ENCODE measurements at regions of chr16 and their contacts with region 1.

Region 1: GRCh38 chr16:4253394-4254150 is 11.7 kb upstream of the SRL start:
- DNase-seq: peak; percentile 98 to 100 (median 99)
- ATAC-seq: peak; percentile 96
- H3K4me3 ChIP-seq: peak overlapping the region; percentile 81 to 92
- H3K4me3 Mint-ChIP-seq: peak overlapping the region; percentile 93
- H3K27ac ChIP-seq: peak overlapping the region; percentile 88 to 89
- H3K27ac Mint-ChIP-seq: peak overlapping the region; percentile 98
- H3K4me1 ChIP-seq: peaks cover 6% of the 10 kb centered on the region
- H3K4me1 Mint-ChIP-seq: peaks cover 7% of the 10 kb centered on the region
- H3K27me3 ChIP-seq: no peaks in the 10 kb centered on the region
- H3K27me3 Mint-ChIP-seq: no peaks in the 10 kb centered on the region
- CTCF ChIP-seq: no peak

Region 2: DNA sequence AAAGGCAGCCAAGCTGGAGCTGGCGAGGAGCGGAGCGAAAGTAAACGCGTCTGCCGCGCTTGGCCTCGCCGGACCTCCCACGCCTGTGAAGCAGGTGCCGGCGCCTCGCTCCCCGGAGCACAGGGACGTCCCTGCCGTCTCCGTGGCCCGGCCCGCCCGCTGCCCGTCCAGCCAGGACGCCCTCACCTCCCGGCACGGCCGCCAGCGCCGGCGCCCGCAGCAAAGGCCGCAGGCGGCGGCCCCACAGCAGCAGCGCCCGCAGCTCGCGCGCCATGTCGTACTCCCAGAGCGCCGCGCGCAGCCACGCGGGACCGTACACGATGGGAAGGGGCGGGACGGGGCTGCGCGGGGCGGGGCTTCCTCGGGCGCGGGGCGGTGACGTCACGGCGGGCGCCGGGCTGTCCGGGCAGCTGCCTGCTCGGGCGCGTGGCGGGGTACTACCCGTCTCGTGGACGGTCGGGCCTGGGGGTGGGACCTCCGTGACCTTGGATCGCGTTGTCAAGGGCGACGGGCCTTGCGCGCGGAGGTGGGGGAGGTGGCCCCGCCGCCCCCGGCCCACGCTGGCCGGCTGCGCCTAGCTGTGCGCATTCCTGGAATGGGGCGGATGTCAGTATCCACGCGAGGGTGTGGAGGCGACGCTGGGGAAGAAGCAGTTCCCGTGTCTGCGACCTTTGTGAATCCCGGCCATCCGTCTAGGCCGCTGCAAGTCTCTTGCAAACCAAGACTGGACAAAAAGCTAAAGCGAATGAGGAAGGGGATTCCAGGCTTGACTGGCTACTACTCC is 536.1 kb before region 1 on chr16 and contains the start of gene TRAP1:
- CTCF ChIA-PET with region 1: no interaction called
- POLR2A ChIA-PET with region 1: interaction called, 3 read pairs
- intact Hi-C with region 1: loop called (anchors 2 to 5 kb)
- DNase-seq: peak; percentile 85 to 96 (median 91)
- ATAC-seq: peak; percentile 97
- H3K4me3 ChIP-seq: peak within 1 kb of the TSS; percentile 94 to 96
- H3K4me3 Mint-ChIP-seq: peak within 1 kb of the TSS; percentile 91
- H3K27ac ChIP-seq: peak within 1 kb of the TSS; percentile 84 to 88
- H3K27ac Mint-ChIP-seq: peak within 1 kb of the TSS; percentile 92
- H3K4me1 ChIP-seq: peaks cover 15% of the 10 kb centered on the region
- H3K4me1 Mint-ChIP-seq: peaks cover 38% of the 10 kb centered on the region
- H3K27me3 ChIP-seq: no peaks in the 10 kb centered on the region
- H3K27me3 Mint-ChIP-seq: no peaks in the 10 kb centered on the region
- CTCF ChIP-seq: no peak
- total RNA-seq, gene TRAP1: 48.3 to 57.4 TPM

Region 3: GRCh38 chr16:3961449-3961849 is 292.1 kb before region 1 on chr16:
- CTCF ChIA-PET with region 1: interaction called, 4 read pairs
- POLR2A ChIA-PET with region 1: no interaction called
- intact Hi-C with region 1: loop called (anchors 5 to 10 kb)
- DNase-seq: no peak
- ATAC-seq: no peak
- H3K4me3 ChIP-seq: no peak overlapping the region
- H3K4me3 Mint-ChIP-seq: peak overlapping the region; percentile 83
- H3K27ac ChIP-seq: no peak overlapping the region
- H3K27ac Mint-ChIP-seq: no peak overlapping the region
- H3K4me1 ChIP-seq: peaks cover 18% of the 10 kb centered on the region
- H3K4me1 Mint-ChIP-seq: peaks cover 20% of the 10 kb centered on the region
- H3K27me3 ChIP-seq: peaks cover 0 to 4% of the 10 kb centered on the region in 2 experiments
- H3K27me3 Mint-ChIP-seq: peaks cover 10% of the 10 kb centered on the region
- CTCF ChIP-seq: no peak

Region 4: GRCh38 chr16:4183237-4184036 is 70.1 kb before region 1 on chr16:
- CTCF ChIA-PET with region 1: no interaction called
- POLR2A ChIA-PET with region 1: no interaction called
- intact Hi-C with region 1: loop called in 1 of 2 experiments (anchors 1 kb)
- DNase-seq: peak; percentile 58 to 92 (median 83)
- ATAC-seq: peak; percentile 87
- H3K4me3 ChIP-seq: peak overlapping the region; percentile 67 to 79
- H3K4me3 Mint-ChIP-seq: peak overlapping the region; percentile 76
- H3K27ac ChIP-seq: peak overlapping the region; percentile 31 to 48
- H3K27ac Mint-ChIP-seq: no peak overlapping the region
- H3K4me1 ChIP-seq: peaks cover 11% of the 10 kb centered on the region
- H3K4me1 Mint-ChIP-seq: peaks cover 6% of the 10 kb centered on the region
- H3K27me3 ChIP-seq: peaks cover 0 to 2% of the 10 kb centered on the region in 2 experiments
- H3K27me3 Mint-ChIP-seq: no peaks in the 10 kb centered on the region
- CTCF ChIP-seq: no peak

Region 5: GRCh38 chr16:4330277-4330874 is 76.8 kb after region 1 on chr16:
- CTCF ChIA-PET with region 1: interaction called, 10 read pairs
- POLR2A ChIA-PET with region 1: no interaction called
- intact Hi-C with region 1: no loop called
- DNase-seq: peak; percentile 49 to 84 (median 75)
- ATAC-seq: peak; percentile 68
- H3K4me3 ChIP-seq: no peak overlapping the region
- H3K4me3 Mint-ChIP-seq: no peak overlapping the region
- H3K27ac ChIP-seq: no peak overlapping the region
- H3K27ac Mint-ChIP-seq: no peak overlapping the region
- H3K4me1 ChIP-seq: peaks cover 14% of the 10 kb centered on the region
- H3K4me1 Mint-ChIP-seq: peaks cover 5% of the 10 kb centered on the region
- H3K27me3 ChIP-seq: no peaks in the 10 kb centered on the region
- H3K27me3 Mint-ChIP-seq: no peaks in the 10 kb centered on the region
- CTCF ChIP-seq: peak; percentile 91

Region 6: DNA sequence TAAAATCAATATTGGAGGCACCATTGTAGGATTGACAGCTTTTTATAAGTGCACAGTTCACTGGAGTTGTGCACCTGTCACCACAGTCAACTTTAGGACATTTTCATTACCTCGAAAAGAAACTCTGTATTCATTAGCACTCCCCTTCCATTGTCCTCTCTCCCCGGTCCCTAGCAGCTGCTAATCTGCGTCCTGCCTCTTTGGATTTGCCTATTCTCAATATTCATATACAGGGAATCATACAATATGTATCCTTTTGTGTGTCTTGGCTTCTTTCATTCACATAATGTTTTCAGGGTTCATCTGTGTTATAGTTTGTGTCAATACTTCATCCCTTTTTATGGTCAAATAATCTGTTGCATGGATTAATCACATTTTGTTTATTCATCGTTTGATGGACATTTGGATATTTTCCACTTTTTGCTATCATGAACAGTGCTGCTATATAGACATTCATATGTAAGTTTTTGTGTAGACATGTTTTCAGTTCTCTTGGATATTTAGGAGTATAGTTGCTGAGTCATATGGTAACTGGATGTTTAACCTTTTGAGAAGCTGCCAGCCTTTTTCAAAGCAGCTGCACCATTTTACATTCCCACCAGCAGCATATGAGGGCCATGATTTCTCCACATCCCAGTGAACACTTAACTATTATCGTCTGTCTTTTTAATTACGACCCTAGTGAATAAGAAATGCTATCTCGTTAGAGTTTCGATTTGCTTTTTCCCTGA is 181.9 kb after region 1 on chr16:
- CTCF ChIA-PET with region 1: no interaction called
- POLR2A ChIA-PET with region 1: no interaction called
- intact Hi-C with region 1: no loop called
- DNase-seq: no peak
- ATAC-seq: no peak
- H3K4me3 ChIP-seq: no peak overlapping the region
- H3K4me3 Mint-ChIP-seq: no peak overlapping the region
- H3K27ac ChIP-seq: no peak overlapping the region
- H3K27ac Mint-ChIP-seq: peak overlapping the region; percentile 41
- H3K4me1 ChIP-seq: no peaks in the 10 kb centered on the region
- H3K4me1 Mint-ChIP-seq: peaks cover 21% of the 10 kb centered on the region
- H3K27me3 ChIP-seq: no peaks in the 10 kb centered on the region
- H3K27me3 Mint-ChIP-seq: no peaks in the 10 kb centered on the region
- CTCF ChIP-seq: no peak

Region 7: DNA sequence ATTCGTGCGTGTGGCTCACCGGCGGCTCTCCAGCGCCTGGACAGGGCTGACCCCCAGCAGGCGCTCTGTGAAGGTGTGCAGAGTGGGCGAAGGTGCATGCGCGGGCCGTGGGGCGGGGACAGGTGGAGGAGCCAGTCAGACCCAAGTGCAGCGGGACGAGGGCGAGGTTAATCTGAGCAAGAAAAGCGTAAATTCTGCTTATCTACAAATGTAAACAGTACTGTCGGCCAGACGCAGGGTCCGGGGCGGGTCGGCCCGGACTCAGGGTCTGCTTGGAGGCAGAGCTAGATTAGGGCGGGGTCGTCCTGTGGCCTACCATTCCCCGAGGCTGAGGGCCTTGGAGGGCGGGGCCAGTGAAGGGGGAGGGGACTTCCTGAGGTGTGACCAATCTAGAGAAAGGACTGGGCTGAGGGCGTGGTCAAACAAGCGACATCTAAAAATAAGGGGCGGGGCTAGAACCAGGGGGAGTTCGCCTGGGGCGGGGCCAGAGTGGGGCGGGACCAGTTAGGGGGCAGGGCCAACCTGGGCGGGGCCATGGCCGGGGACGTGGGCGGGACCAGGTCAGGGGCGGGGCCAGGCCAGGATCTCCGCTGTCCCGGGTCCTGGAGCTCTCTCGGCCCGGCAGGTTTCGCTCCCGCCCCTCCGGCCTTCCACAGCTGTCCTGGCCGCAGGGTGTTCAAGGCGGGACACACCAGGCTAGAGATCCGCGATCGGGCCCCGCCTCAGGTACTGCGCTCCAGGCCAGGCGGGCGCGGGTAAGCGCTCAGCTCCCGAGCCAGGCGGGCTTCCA is 704.3 kb after region 1 on chr16 and contains the start of gene SEC14L5:
- CTCF ChIA-PET with region 1: no interaction called
- POLR2A ChIA-PET with region 1: no interaction called
- intact Hi-C with region 1: loop called in 1 of 2 experiments (anchors 10 kb)
- DNase-seq: peak; percentile 72 to 92 (median 87)
- ATAC-seq: peak; percentile 98
- H3K4me3 ChIP-seq: peak within 1 kb of the TSS; percentile 40 to 70
- H3K4me3 Mint-ChIP-seq: peak within 1 kb of the TSS; percentile 82
- H3K27ac ChIP-seq: no peak within 1 kb of the TSS
- H3K27ac Mint-ChIP-seq: no peak within 1 kb of the TSS
- H3K4me1 ChIP-seq: peaks cover 15% of the 10 kb centered on the region
- H3K4me1 Mint-ChIP-seq: peaks cover 20% of the 10 kb centered on the region
- H3K27me3 ChIP-seq: peaks cover 6 to 22% of the 10 kb centered on the region in 2 experiments
- H3K27me3 Mint-ChIP-seq: peaks cover 55% of the 10 kb centered on the region
- CTCF ChIP-seq: no peak
- total RNA-seq, gene SEC14L5: not detected